ENCODE measurements at regions of chr6 and their contacts with region 1.

Region 1: DNA sequence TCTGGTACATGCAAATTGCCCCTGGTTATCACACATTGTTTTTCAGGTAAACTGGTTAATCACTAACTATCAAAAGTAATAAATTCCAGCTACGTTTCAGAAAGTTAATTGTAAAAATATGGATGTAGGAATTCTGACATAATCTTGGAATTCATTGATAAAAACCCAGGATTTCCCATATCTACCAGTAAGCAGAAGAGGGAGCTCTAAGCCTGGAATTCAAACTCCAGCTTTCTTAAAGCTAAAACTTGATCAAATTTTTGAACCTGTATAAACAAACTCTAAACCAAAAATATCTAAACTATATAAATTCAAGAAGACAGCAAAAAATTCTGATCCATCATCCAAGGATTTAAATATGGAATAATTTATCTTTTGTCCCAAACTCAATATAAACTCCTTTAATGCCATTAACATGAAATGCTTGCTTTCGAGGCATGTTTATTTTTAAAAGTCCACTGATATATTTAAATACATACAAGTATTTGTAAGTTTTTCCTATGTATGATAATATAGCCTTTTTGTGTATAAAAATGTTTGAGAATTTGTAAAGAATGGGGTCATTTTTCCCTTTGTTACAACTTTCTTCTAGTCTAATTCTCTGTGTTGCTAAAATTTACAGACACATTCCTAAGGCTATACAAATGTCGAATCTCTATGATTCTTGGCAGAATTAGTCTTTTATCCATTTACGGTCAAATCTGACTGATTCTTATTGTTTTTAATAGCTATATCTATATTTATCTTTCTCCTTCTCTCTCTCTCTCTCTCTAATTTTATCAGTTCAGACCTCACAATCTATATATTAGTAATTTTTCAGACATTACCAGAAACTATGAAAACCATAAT is 91.4 kb upstream of the RNF217 start:
- DNase-seq: no peak
- H3K4me3 ChIP-seq: no peak overlapping the region
- H3K27ac ChIP-seq: no peak overlapping the region
- H3K4me1 ChIP-seq: peaks cover 0 to 12% (median 5%) of the 10 kb centered on the region in 4 donors
- H3K27me3 ChIP-seq: no peaks in the 10 kb centered on the region
- CTCF ChIP-seq: peak; percentile 25 to 72 (median 54)
- EP300 ChIP-seq: no peak
- POLR2A ChIP-seq: no peak

Region 2: DNA sequence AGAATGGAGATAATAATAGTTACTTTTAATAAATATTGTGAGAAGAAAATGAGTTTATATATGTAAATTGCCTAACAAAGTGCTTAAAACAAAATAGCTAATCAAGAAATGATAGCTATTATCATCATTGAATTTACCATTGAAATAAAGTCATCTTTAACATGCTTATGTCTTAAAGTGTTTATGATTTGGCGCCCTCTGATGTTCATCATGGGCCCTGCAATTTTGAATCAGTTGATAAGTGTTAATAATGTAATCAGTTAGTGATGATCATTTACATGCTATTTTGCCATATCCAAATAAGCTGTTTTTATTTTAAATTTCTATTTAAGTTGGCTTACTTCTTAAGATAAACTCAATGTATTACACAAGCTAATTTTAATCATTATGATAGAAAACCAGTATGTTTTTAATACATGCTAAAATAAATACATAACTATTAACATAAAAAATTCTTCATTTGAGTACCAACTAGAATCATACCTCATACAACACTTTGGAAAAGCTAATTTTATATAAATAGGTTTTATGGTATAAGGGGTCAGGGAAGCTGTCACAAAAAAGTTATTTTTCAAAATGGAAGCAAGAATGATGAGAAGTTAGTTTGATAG is 243.5 kb after region 1 on chr6:
- intact Hi-C with region 1: loop called (anchors 2 kb)
- DNase-seq: peak; percentile 72
- H3K4me3 ChIP-seq: no peak overlapping the region
- H3K27ac ChIP-seq: no peak overlapping the region
- H3K4me1 ChIP-seq: peaks cover 0 to 4% (median 0%) of the 10 kb centered on the region in 4 donors
- H3K27me3 ChIP-seq: no peaks in the 10 kb centered on the region
- CTCF ChIP-seq: peak; percentile 26 to 82 (median 69)
- EP300 ChIP-seq: no peak
- POLR2A ChIP-seq: no peak

Region 3: GRCh38 chr6:125301435-125302391 is 430.9 kb after region 1 on chr6 and contains the start of gene HDDC2:
- intact Hi-C with region 1: loop called (anchors 10 kb)
- DNase-seq: peak; percentile 84
- H3K4me3 ChIP-seq: peak within 1 kb of the TSS; percentile 44 to 87 (median 70)
- H3K27ac ChIP-seq: peak within 1 kb of the TSS; percentile 91 to 94 (median 93)
- H3K4me1 ChIP-seq: peaks cover 0 to 17% (median 16%) of the 10 kb centered on the region in 4 donors
- H3K27me3 ChIP-seq: no peaks in the 10 kb centered on the region
- CTCF ChIP-seq: no peak
- EP300 ChIP-seq: no peak
- POLR2A ChIP-seq: no peak
- total RNA-seq, gene HDDC2: 39.9 to 61.7 (median 55.8) TPM

Region 4: GRCh38 chr6:125332664-125333063 is 461.8 kb after region 1 on chr6:
- intact Hi-C with region 1: no loop called
- DNase-seq: no peak
- H3K4me3 ChIP-seq: no peak overlapping the region
- H3K27ac ChIP-seq: no peak overlapping the region
- H3K4me1 ChIP-seq: no peaks in the 10 kb centered on the region
- H3K27me3 ChIP-seq: no peaks in the 10 kb centered on the region
- CTCF ChIP-seq: no peak
- EP300 ChIP-seq: no peak
- POLR2A ChIP-seq: no peak

Measured in sigmoid colon (tissue), 7 donors.